KBM-7 (cell line): ENCODE measurements at regions of chr10 and their contacts with region 1.

Region 1: GRCh38 chr10:14837757-14838581 is at the starts of genes CDNF, HSPA14 and MSANTD7:
- DNase-seq: peak; percentile 99

Region 2: GRCh38 chr10:14536241-14537213 is 301.4 kb before region 1 on chr10:
- in situ Hi-C with region 1: loop called (anchors 25 kb)
- DNase-seq: peak; percentile 62